ENCODE measurements at regions of chr6 and their contacts with region 1.

Region 1: DNA sequence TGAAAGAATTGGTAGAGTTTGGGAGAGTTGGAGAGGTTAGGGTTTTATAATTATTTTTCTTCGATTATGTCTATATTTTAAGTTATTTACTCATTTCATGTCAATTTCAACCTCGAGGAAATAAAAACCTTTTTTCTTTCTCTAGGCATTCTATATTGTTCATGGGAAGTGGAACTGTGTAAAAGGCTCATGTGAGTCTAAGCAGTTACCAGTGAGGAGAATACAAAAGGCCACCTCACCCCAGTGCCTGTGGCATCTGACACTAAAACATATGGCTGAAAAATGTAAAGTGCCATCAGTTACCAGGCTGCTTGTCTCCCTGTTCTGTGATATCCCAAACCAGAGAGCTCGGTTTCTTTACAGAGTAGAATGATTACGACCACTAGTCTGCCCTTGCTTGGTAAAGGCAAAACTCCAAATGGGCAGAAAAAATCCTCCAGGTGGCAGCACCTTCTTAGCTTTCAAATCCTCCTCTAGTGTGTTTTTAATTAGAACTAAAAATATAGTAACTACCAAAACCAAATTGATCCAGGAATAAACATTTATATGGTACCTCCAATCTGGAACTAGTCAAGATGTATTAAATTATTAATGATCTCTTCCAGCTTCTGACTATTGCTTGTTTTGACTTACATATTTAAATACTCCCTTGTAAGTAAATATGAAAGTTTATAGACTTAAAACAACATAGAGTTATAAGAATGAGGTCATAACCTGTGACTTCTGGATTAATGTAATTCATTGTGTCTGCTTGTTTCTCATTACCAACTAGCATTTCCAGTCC is 122.6 kb upstream of the MCHR2 start:
- DNase-seq: peak; percentile 43
- ATAC-seq: peak; percentile 93
- H3K4me3 Mint-ChIP-seq: no peak overlapping the region
- H3K27ac Mint-ChIP-seq: no peak overlapping the region
- H3K4me1 Mint-ChIP-seq: peaks cover 8% of the 10 kb centered on the region
- H3K27me3 Mint-ChIP-seq: no peaks in the 10 kb centered on the region
- CTCF ChIP-seq: peak; percentile 58

Region 2: DNA sequence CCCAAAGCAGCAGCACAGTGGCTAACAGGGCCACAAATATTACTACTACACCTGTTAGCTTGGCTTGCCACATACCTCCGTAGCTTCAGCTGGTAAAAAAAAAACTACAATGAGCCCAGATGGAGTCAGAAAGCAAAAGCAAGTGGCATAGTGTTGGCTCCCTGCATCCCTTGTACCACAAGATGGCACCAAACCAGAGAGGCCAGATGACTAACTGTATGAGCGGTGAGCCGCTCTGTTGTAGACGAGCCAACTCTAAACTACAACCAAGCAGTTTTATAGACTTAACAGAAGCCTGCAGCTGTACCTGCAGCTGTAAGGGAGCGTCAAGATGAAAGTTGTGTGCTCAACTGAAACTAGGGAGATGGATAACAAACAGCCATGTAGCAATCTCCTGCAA is 38.1 kb before region 1 on chr6:
- CTCF ChIA-PET with region 1: no interaction called
- POLR2A ChIA-PET with region 1: no interaction called
- DNase-seq: peak; percentile 46
- ATAC-seq: peak; percentile 100
- H3K4me3 Mint-ChIP-seq: no peak overlapping the region
- H3K27ac Mint-ChIP-seq: no peak overlapping the region
- H3K4me1 Mint-ChIP-seq: no peaks in the 10 kb centered on the region
- H3K27me3 Mint-ChIP-seq: no peaks in the 10 kb centered on the region; the same call in 1 of the 2 replicates
- CTCF ChIP-seq: no peak

Region 3: GRCh38 chr6:100105138-100105753 is 11.4 kb before region 1 on chr6:
- CTCF ChIA-PET with region 1: interaction called, 15 read pairs
- POLR2A ChIA-PET with region 1: no interaction called
- DNase-seq: no peak
- ATAC-seq: no peak
- H3K4me3 Mint-ChIP-seq: no peak overlapping the region
- H3K27ac Mint-ChIP-seq: no peak overlapping the region
- H3K4me1 Mint-ChIP-seq: peaks cover 17% of the 10 kb centered on the region
- H3K27me3 Mint-ChIP-seq: no peaks in the 10 kb centered on the region
- CTCF ChIP-seq: no peak

Region 4: DNA sequence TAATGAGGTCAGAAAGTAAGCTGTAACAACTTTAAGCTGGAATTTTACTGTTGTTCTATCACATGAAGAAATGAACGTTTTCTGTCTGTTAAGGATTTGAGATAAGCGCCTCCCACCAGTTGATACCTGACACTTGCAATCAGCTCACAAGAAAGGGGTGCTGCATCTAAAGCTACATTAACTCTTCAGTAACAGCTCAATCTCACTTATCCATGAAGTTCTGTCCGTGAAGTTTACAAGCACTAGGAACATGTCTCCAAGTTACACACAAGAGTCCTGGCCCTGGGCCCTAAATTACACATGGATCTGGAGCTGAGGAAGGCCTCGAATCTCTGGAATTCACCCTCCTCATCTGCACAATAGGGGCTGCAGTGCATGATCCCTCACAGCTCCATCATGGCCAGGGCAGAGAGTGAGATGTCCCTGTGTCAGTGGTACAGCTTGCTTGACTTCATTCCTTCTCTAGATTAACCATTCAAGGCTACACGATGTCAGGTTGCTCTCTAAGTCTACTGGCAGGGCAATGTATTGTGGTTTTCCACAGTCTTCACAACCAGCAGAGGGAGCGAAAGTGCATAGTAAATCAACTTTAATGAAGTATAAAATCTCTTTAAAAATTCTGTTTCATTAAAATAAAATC is 59.8 kb after region 1 on chr6:
- CTCF ChIA-PET with region 1: interaction called, 11 read pairs
- POLR2A ChIA-PET with region 1: no interaction called
- DNase-seq: no peak
- ATAC-seq: peak; percentile 75
- H3K4me3 Mint-ChIP-seq: no peak overlapping the region
- H3K27ac Mint-ChIP-seq: no peak overlapping the region
- H3K4me1 Mint-ChIP-seq: peaks cover 42% of the 10 kb centered on the region
- H3K27me3 Mint-ChIP-seq: no peaks in the 10 kb centered on the region
- CTCF ChIP-seq: no peak